Activated CD4-positive, alpha-beta T cell treated with anti-CD3 and anti-CD28 coated beads, Interleukin-2, amount 10 ng/mL, durations not matched to agents 24 days and 14 days (primary cell): ENCODE measurements at regions of chr11 and their contacts with region 1.

Region 1: DNA sequence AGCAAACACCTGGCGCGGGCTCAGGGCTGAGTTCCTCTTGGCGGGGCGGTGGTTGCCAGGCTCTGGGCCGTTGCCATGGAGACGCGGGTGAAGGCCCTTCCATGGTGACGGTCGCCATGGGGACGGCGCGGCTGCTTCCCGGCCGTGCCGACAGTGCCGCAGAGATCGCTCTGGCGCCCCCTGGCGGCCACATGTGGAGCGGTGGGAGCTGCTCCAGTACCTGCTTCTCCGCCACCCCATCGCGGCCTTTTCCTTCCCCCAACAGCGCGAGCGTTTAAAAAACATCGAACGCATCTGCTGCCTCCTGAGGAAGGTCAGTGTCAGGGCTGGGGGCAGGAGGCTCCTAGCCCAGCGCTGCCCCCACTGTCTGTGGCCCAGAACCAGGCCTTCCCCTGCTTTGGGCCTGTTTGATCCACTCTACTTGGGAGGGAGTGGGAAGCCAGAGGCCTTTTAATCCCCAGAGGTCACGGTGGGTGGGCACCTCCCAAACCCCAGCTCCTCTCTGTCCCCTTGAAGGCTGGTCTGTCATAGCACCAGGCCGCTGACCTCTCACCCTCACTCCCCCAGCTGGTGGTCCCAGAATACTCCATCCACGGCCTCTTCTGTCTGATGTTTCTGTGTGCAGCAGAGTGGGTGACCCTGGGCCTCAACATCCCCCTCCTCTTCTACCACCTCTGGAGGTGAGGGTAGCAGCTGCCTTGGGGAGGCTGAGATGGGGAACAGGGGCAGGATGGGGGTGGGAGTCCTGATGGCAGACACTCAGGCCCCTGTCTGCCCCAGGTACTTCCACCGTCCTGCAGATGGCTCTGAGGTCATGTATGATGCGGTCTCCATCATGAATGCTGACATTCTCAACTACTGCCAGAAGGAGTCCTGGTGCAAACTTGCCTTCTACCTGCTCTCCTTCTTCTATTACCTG is 4.8 kb downstream of the CNIH2 start:
- DNase-seq: peak; percentile 100
- H3K4me3 Mint-ChIP-seq: no peak overlapping the region
- H3K27ac Mint-ChIP-seq: peak overlapping the region; percentile 53
- H3K4me1 Mint-ChIP-seq: peaks cover 27% of the 10 kb centered on the region
- H3K27me3 Mint-ChIP-seq: peaks cover 7% of the 10 kb centered on the region

Region 2: DNA sequence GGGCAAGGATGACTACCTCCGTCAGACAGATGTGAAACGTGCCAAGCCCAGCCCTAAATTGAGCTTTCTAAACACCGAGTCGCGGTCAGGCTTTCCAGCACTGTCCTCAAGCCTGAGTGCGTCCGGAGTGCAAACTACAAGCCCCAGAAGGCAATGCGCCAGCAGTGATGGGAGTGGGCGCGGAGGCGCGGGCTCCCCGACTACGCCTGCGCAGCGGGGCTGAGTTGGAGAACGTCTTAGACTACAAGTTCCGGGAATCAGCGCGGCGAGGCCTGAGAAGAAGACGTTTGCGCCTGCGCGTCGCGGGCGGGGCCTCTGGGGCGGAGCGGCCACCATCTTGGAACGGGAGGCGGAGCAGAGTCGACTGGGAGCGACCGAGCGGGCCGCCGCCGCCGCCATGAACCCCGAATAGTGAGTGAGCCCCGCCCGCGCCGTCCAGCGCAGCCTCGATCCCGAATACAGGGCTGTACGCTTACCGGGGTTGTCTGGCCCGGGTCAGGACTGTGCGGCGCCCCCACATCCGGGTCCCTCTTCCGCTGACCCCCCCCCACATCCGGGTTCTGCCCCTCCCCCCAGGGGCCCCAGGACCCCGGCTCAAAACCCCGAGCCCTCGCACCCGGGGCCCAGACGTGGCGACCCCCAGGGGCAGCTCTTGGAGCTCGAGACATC is 14.3 kb before region 1 on chr11 and contains the start of gene RAB1B:
- intact Hi-C with region 1: loop called (anchors 1 kb)
- DNase-seq: peak; percentile 100
- H3K4me3 Mint-ChIP-seq: peak within 1 kb of the TSS; percentile 99
- H3K27ac Mint-ChIP-seq: peak within 1 kb of the TSS; percentile 98
- H3K4me1 Mint-ChIP-seq: peaks cover 27% of the 10 kb centered on the region
- H3K27me3 Mint-ChIP-seq: peaks cover 4% of the 10 kb centered on the region
- total RNA-seq, gene RAB1B: 117 and 123 TPM in 2 replicates

Region 3: DNA sequence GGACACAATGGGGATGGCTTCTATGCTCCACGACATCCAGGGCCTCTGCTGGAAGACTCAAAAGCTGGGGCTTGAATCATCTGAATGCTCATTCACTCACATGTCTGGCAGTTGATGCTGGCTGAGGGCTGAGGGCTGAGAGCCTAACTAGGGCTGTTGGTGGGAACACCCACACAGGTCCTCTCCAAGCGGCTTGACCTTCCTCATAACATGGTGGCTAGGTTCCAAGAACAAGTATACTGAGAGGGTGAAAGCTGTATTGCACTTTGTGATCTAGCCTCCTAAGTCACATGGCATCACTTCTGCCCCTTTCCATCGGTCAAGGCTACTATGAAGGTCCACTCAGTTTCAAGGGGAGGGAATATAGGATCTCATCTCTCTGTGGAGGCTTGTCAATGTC is 16.5 kb after region 1 on chr11:
- intact Hi-C with region 1: no loop called
- DNase-seq: no peak
- H3K4me3 Mint-ChIP-seq: no peak overlapping the region
- H3K27ac Mint-ChIP-seq: no peak overlapping the region
- H3K4me1 Mint-ChIP-seq: no peaks in the 10 kb centered on the region
- H3K27me3 Mint-ChIP-seq: peaks cover 3% of the 10 kb centered on the region

Region 4: GRCh38 chr11:66336234-66337102 is 53.7 kb after region 1 on chr11 and contains the start of gene RIN1:
- intact Hi-C with region 1: no loop called
- DNase-seq: peak; percentile 83
- H3K4me3 Mint-ChIP-seq: peak within 1 kb of the TSS; percentile 72
- H3K27ac Mint-ChIP-seq: peak within 1 kb of the TSS; percentile 78
- H3K4me1 Mint-ChIP-seq: peaks cover 17% of the 10 kb centered on the region
- H3K27me3 Mint-ChIP-seq: peaks cover 2% of the 10 kb centered on the region
- total RNA-seq, gene RIN1: 0.99 and 1.1 TPM in 2 replicates